Breast epithelium (tissue), 4 donors: ENCODE measurements at regions of chr9 and their contacts with region 1.

Region 1: GRCh38 chr9:130770679-130771442 is 64.2 kb upstream of the ABL1 start:
- DNase-seq: no peak
- H3K4me3 ChIP-seq: no peak overlapping the region
- H3K27ac ChIP-seq: no peak overlapping the region
- H3K4me1 ChIP-seq: no peaks in the 10 kb centered on the region
- H3K27me3 ChIP-seq: no peaks in the 10 kb centered on the region
- CTCF ChIP-seq: peak; percentile 67 to 82 (median 75)
- POLR2A ChIP-seq: no peak

Region 2: GRCh38 chr9:130712564-130713285 is 58.1 kb before region 1 on chr9:
- intact Hi-C with region 1: loop called (anchors 10 kb)
- DNase-seq: peak; percentile 98 to 99
- H3K4me3 ChIP-seq: peak overlapping the region; percentile 95 to 99 (median 99)
- H3K27ac ChIP-seq: peak overlapping the region; percentile 99
- H3K4me1 ChIP-seq: peaks cover 3 to 8% of the 10 kb centered on the region in 2 donors
- H3K27me3 ChIP-seq: no peaks in the 10 kb centered on the region
- CTCF ChIP-seq: peak in 1 of 3 donors; percentile 15
- POLR2A ChIP-seq: no peak

Region 3: DNA sequence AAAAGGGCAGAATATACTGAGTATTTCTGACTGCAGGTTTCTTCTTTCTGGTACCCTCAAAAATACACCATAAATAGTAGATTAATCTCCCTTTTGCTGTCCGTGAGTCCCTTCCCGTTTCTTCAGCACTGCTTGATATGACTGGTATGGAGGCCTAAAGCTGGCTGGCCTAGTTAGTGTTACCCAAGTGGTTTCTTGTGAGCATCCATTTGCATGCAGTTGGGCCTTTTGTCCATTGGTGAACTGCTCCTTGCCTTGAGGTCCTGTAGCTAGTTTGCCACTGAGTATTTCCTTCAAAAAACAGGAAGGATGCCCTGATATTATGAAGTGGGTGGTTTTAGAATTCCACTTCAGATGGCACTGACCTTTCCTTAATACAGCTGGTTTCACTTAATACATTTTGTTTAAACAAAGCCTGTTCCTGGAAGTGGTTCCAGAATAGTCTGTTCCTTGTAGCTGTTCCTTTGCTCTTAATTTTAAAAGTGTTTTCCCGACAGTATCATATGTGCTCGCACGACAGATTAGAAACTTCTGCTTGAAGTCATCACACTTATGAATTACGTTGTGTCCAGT is 24.1 kb after region 1 on chr9:
- intact Hi-C with region 1: no loop called
- DNase-seq: no peak
- H3K4me3 ChIP-seq: no peak overlapping the region
- H3K27ac ChIP-seq: peak overlapping the region; percentile 41 to 81
- H3K4me1 ChIP-seq: no peaks in the 10 kb centered on the region
- H3K27me3 ChIP-seq: no peaks in the 10 kb centered on the region
- CTCF ChIP-seq: no peak
- POLR2A ChIP-seq: no peak

Region 4: DNA sequence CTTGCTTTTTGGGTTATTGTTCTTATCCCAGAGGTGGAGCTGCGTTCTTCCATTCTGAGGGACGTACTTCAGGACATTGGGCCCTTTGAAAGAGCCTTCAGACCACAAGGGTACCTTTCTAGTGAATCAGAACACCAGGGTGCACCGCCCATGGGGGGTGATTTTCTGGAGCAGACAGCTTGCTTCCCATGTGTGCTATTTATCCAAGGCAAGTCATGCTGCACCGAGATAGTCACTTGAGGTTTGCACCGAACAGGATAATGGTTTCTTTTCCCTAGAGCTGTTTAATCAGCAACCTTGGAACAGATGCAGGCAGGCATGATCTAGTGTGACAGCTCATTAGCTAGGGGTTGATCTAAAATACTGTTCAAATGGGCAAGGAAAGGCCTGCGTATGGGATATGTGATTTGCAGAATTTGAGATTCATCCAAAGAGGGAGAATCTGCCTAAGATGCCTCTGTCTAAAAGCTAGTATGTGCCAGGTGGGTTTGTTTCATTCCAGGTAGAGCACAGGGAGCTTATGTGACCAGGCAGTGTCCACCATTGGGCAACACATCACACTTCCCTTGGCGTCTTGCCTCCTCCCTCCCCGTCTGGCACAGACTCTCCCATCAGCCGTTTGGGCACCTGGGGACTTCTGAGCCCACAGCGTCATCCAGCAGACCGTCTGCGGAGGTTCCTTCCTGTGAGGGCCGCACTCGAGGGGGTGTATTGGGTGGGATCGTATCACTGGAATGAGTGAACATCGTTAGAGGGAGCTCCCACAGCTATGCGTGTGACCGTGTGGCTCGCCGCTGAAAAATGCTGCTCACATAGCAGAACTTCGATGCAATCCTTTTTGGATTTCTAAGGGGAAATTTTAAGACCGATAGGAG is 87.2 kb after region 1 on chr9:
- intact Hi-C with region 1: loop called (anchors 10 kb)
- DNase-seq: peak in 1 of 2 donors; percentile 53
- H3K4me3 ChIP-seq: peak overlapping the region in 1 of 3 donors; percentile 36
- H3K27ac ChIP-seq: peak overlapping the region; percentile 61 to 80
- H3K4me1 ChIP-seq: peaks cover 5 to 12% of the 10 kb centered on the region in 2 donors
- H3K27me3 ChIP-seq: no peaks in the 10 kb centered on the region
- CTCF ChIP-seq: no peak
- POLR2A ChIP-seq: no peak